Posterior cingulate gyrus (tissue), 11 donors: ENCODE measurements at regions of chr1 and their contacts with region 1.

Region 1: DNA sequence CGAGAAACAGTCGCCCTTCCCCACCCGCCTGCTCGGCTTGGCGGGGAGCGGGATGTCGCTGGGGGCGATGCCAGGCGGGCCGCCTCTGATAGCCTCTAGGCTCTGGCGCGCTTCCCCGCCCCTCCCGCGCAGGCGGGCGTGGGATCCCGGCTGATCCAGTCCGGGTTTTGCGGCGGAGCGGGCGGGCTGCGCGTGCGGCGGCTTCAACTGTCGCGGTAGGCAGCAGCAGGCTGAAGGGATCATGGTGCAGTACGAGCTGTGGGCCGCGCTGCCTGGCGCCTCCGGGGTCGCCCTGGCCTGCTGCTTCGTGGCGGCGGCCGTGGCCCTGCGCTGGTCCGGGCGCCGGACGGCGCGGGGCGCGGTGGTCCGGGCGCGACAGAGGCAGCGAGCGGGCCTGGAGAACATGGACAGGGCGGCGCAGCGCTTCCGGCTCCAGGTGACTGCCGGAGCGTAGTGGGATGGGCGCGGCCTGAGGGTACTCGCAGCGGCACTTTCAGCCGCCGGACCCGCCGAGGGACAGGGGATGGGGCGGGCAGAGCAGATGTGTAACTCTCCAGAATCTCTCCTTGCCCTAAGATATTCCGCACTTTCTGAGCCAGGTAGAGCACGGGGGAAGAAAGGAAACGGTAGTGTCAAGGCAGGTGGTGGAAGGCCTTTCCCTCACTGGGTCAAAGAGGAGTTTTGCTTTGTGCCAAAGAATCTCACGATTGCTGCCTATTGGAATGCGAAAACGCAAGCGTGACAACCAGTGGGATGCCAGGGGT is at the start of gene FAAH:
- DNase-seq: peak; percentile 79 to 98 (median 86)

Region 2: GRCh38 chr1:46340404-46341221 is 53.7 kb before region 1 on chr1 and contains the start of gene NSUN4:
- intact Hi-C with region 1: loop called (anchors 5 kb)
- DNase-seq: peak; percentile 84 to 99 (median 92)

Region 3: DNA sequence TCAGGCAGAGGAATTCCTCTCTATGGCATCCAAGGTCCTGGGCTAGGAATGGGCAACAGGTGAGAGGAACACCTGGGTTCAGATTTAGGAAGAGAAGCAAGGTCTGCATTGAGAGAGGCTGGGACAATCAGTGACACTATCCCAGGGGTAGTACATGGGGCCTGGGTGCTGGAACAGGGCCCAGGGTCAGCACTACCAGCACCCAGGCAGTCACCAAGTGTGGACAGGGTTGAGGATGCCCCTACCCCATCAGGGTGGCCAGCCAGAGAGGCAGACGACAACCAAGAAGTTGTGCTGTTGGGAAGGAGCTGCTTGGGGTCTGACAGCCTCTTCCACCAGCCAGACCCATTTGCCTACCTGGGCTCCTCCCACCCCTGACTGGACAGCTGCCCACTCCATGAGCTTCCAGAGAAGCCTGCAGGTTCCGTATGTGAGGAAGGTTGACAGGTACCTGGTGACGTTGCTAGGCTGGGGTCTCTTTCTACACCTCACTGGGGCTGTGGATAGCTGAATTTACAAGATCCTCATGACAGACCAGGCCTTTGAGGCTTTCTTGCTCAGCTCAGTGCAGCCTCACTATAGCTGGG is 533.1 kb after region 1 on chr1:
- intact Hi-C with region 1: no loop called
- DNase-seq: no peak